Body of pancreas (tissue), 4 donors: ENCODE measurements at regions of chr10 and their contacts with region 1.

Region 1: DNA sequence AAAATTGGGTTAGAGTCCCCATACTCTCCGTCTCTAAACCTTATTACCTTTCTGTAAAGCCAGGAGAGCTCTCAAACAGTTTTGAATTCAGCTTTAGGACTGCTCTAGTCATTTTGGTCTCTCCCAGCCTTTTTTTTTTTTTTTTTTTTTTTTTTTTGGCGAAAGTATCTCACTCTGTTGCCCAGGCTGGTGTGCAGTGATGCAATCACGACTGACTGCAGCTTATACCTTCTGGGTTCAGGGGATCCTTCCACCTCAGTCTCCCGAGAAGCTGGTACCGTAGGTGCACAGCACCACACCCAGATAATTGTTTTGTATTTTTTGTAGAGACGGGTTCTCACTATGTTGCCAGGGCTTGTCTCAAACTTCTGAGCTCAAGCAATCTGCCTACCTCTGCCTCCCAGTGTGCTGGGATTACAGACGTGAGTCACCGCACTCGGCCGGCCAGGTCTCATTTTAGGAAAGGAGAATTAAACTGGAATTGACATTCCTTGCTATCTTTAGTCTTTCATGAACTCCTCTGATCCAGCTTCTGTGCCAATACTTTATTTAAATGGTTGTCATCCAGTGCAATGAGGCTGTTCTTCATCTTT is 31.4 kb upstream of the RSU1 start:
- DNase-seq: no peak
- ATAC-seq: no peak
- H3K4me3 ChIP-seq: no peak overlapping the region
- H3K27ac ChIP-seq: no peak overlapping the region
- H3K4me1 ChIP-seq: no peaks in the 10 kb centered on the region
- H3K27me3 ChIP-seq: no peaks in the 10 kb centered on the region
- CTCF ChIP-seq: no peak
- POLR2A ChIP-seq: no peak

Region 2: DNA sequence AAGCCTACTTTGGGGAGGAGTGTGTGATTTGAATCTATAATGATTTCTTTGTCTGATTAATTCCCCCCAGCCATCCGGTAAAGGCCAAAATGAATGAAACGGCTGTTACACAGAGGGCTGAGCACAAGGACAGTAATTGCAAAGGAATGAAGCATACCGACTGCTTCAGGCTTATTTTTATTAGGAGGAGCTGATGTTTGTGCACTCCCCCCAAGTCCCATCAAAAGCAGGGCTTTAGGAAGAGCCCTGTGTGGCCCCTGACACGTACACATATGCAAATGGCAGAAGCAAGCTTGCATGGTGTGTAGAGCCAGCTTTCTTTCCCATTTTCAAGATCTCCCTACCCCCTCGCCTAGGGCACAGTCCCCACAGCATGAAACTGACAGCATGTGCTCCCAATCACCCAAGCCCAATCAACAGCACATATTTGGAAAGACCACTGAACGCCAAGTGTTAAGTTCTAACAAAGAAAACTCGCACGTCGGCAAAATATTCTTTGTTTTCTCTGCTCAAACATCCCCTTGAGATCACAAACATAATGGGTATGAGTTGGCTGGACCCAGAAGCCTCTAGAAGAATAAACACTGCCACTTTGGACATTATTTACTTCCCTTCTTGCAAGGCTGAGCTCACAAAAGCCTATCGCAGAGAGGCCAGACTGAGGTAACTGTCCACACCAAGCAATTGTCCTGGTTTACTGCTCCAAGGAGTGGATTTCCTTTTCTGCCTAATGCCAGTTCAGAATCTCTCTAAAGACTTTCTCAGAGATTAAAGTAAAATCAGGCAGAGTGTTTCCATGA is 137.9 kb after region 1 on chr10:
- intact Hi-C with region 1: no loop called
- DNase-seq: no peak
- ATAC-seq: no peak
- H3K4me3 ChIP-seq: no peak overlapping the region
- H3K27ac ChIP-seq: peak overlapping the region in 1 of 4 donors; percentile 32
- H3K4me1 ChIP-seq: no peaks in the 10 kb centered on the region
- H3K27me3 ChIP-seq: no peaks in the 10 kb centered on the region
- CTCF ChIP-seq: no peak
- POLR2A ChIP-seq: no peak

Region 3: GRCh38 chr10:17257466-17258321 is 409.0 kb after region 1 on chr10:
- intact Hi-C with region 1: loop called (anchors 5 kb)
- DNase-seq: peak; percentile 63 to 76 (median 65)
- ATAC-seq: peak; percentile 94
- H3K4me3 ChIP-seq: no peak overlapping the region
- H3K27ac ChIP-seq: no peak overlapping the region
- H3K4me1 ChIP-seq: no peaks in the 10 kb centered on the region
- H3K27me3 ChIP-seq: no peaks in the 10 kb centered on the region
- CTCF ChIP-seq: peak; percentile 56 to 92 (median 88)
- POLR2A ChIP-seq: no peak

Region 4: DNA sequence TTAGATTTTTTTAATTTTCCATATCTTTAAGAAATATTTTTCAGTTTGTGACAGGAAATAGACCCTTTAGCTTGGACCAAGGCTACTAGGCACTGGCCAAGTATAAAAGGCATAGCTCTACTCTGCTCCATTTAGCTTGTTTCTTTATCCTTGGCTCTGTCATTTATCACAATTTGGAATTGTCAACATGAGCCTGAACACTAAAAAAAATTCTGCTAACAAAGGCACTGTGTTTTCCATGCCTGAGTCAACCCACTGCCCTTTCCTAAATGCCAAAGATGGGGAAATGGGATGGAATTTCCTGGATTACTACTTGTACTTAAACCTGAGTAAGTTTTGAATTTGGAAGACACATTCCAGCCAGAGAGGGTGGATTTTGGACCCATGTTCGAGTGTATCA is 1674.4 kb after region 1 on chr10:
- intact Hi-C with region 1: no loop called
- DNase-seq: peak in 1 of 4 donors; percentile 3
- ATAC-seq: peak; percentile 58
- H3K4me3 ChIP-seq: no peak overlapping the region
- H3K27ac ChIP-seq: peak overlapping the region in 3 of 4 donors; percentile 17 to 53 (median 37)
- H3K4me1 ChIP-seq: peaks cover 6% of the 10 kb centered on the region
- H3K27me3 ChIP-seq: no peaks in the 10 kb centered on the region
- CTCF ChIP-seq: no peak
- POLR2A ChIP-seq: no peak